Cardiac septum (tissue), 1 donor: ENCODE measurements at regions of chr1 and their contacts with region 1.

Region 1: GRCh38 chr1:175023043-175023921 is at the start of gene MRPS14:
- DNase-seq: peak; percentile 98
- total RNA-seq, gene MRPS14: 24.4 TPM

Region 2: GRCh38 chr1:174999216-174999925 is 23.9 kb before region 1 on chr1:
- intact Hi-C with region 1: loop called (anchors 1 kb)
- DNase-seq: peak; percentile 99

Region 3: DNA sequence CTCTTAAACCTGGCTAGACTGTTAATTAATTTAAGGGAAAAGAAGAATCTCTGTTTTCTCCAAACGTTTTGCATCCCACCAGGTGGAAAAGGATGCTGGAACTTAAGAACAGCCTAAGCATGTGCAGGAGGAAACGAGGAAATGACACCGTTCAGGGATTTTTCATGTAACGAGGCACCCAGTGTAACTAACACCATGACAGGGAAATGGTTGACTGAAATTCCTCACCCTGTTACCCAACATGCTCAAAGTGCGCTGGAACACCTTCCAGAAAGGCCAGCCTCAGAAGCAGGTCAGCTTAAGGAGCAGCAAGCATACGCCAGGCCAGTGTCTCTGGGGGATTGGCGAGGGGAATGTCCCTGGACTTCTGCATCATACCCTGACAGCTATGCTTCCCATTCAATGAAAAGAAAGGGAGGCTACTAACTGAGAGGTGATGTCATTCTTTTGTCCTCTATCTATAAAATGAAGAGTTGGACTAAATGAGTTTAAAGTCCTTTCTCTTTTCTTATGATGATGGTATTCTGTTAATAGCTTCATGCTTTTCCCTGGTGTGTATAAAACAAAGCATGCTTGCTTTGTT is 65.9 kb after region 1 on chr1:
- intact Hi-C with region 1: no loop called
- DNase-seq: no peak

Region 4: DNA sequence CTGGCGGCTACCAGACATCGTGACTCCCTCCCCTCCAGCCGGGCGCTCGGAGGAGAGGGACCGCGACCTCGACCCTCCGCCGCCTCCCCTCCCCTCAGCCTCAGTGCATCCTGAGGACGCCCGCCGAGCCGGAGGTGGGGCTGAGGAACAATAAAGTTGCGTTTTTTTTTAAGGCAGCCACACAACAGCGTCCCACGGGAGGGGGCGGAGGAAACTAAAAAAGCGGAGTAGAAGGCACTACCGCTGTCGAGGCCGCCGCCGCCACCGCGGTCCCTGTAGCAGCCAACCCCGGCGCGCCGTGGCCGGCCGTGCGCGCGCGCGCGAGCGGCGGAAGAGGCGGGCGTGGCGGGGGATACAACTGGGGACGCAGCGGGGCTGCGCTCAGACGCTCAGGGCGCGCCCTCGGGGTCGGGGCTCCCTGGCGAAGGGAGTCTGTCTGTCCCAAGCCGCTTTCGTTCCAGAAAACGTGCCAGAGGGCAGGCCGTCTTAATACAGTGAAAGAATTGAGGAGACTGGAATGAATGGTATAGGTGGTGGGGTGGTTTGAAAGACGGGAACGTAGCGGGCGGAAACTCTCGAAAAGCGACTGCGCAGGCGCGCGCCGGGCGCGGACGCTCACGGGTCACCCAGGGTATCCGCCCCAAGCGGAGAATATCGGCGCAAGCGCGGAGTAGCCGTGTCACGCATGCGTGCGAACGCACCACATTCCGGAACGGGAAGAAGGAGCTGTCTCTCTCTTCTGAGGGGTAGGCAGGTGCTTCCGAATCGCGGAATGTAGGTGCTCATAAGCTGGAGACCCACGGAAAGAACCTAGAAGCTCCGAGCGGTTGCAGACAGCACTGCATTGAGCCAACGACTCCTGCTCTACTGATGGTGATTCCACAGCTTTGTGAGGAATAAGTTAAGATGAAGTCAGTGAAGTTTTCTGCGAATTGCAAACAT is 1184.0 kb after region 1 on chr1 and contains the start of gene COP1:
- intact Hi-C with region 1: loop called (anchors 10 kb)
- DNase-seq: peak; percentile 99
- total RNA-seq, gene COP1: 22.8 TPM